CD8-positive, alpha-beta T cell (primary cell): ENCODE measurements at regions of chr7 and their contacts with region 1.

Region 1: GRCh38 chr7:134432296-134433152 is 26.4 kb downstream of the AKR1B1 start:
- DNase-seq: peak; percentile 32 to 89 (median 71)
- ATAC-seq: peak; percentile 88
- H3K4me3 ChIP-seq: peak overlapping the region; percentile 24 to 37
- H3K4me3 Mint-ChIP-seq: peak overlapping the region; percentile 78
- H3K27ac ChIP-seq: peak overlapping the region; percentile 11 to 69
- H3K27ac Mint-ChIP-seq: peak overlapping the region; percentile 77
- H3K4me1 ChIP-seq: peaks cover 4% of the 10 kb centered on the region
- H3K4me1 Mint-ChIP-seq: peaks cover 16% of the 10 kb centered on the region
- H3K27me3 ChIP-seq: no peaks in the 10 kb centered on the region
- H3K27me3 Mint-ChIP-seq: no peaks in the 10 kb centered on the region
- CTCF ChIP-seq: peak; percentile 52

Region 2: GRCh38 chr7:133081599-133082389 is 1350.7 kb before region 1 on chr7 and contains the start of gene CHCHD3:
- CTCF ChIA-PET with region 1: no interaction called
- POLR2A ChIA-PET with region 1: no interaction called
- intact Hi-C with region 1: loop called in 1 of 2 experiments (anchors 5 kb)
- DNase-seq: peak; percentile 88 to 98 (median 96)
- ATAC-seq: peak; percentile 98
- H3K4me3 ChIP-seq: peak within 1 kb of the TSS; percentile 94 to 96
- H3K4me3 Mint-ChIP-seq: peak within 1 kb of the TSS; percentile 92
- H3K27ac ChIP-seq: peak within 1 kb of the TSS; percentile 92 to 94
- H3K27ac Mint-ChIP-seq: peak within 1 kb of the TSS; percentile 96
- H3K4me1 ChIP-seq: peaks cover 16% of the 10 kb centered on the region
- H3K4me1 Mint-ChIP-seq: peaks cover 33% of the 10 kb centered on the region
- H3K27me3 ChIP-seq: no peaks in the 10 kb centered on the region
- H3K27me3 Mint-ChIP-seq: peaks cover 3% of the 10 kb centered on the region
- CTCF ChIP-seq: no peak
- total RNA-seq, gene CHCHD3: 19.0 to 20.4 TPM

Region 3: DNA sequence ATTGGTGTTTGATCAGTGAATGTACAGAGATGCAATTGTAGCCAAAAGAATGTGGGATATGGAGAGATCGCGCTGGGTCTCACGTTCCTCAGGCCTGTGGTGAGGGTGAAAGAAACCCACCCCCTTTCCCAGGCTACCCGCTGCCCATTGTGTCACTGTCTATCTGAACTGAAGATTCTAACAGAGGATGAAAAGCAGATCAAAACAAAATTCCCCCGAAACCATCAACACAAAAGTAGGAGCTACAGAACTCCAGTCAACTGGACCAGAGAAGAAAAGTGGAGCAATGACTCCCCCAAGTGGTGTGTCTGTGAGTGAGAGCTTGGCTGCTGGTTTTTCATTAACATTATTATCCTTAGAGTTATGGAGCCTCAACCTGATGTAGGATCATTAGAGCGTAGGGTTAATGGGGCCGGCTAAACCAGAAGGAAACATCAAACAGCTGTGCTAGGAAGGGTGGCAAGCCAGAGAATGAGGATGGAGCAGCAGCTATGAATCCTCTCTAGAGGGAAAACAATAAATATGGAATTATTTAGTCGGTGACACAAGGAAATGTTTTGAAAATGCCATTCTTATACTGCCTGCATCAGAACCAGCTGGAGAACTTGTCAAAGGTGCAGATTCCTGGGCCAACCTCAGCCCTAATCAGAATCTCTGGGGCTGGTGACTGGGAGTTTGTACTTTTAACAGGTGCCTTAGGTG is 11.9 kb before region 1 on chr7:
- CTCF ChIA-PET with region 1: interaction called, 11 read pairs
- POLR2A ChIA-PET with region 1: no interaction called
- intact Hi-C with region 1: no loop called
- DNase-seq: no peak
- ATAC-seq: no peak
- H3K4me3 ChIP-seq: no peak overlapping the region
- H3K4me3 Mint-ChIP-seq: no peak overlapping the region
- H3K27ac ChIP-seq: no peak overlapping the region
- H3K27ac Mint-ChIP-seq: no peak overlapping the region
- H3K4me1 ChIP-seq: no peaks in the 10 kb centered on the region
- H3K4me1 Mint-ChIP-seq: no peaks in the 10 kb centered on the region
- H3K27me3 ChIP-seq: no peaks in the 10 kb centered on the region
- H3K27me3 Mint-ChIP-seq: peaks cover 5% of the 10 kb centered on the region
- CTCF ChIP-seq: no peak

Region 4: DNA sequence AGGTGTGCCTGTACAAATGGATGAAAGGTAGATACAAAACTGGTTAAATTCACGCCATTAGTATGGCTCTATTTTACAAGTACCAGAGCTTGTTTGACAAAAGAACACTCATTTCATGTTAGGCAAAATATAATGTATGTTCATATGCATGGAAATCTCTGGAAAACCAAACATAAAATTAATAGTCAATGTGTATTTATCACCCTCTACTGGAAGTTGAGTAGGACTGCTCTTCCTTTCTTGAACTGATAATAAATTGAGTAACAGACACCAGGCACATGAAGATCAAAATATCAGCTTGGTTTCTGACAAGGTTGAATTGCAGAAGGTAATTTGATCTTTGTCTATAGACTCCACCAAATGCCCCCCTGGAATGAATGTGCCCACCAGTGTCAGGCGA is 46.2 kb after region 1 on chr7:
- CTCF ChIA-PET with region 1: interaction called, 6 read pairs
- POLR2A ChIA-PET with region 1: interaction called, 3 read pairs
- intact Hi-C with region 1: loop called in 1 of 2 experiments (anchors 1 kb)
- DNase-seq: no peak
- ATAC-seq: no peak
- H3K4me3 ChIP-seq: no peak overlapping the region
- H3K4me3 Mint-ChIP-seq: no peak overlapping the region
- H3K27ac ChIP-seq: no peak overlapping the region
- H3K27ac Mint-ChIP-seq: no peak overlapping the region
- H3K4me1 ChIP-seq: no peaks in the 10 kb centered on the region
- H3K4me1 Mint-ChIP-seq: no peaks in the 10 kb centered on the region
- H3K27me3 ChIP-seq: no peaks in the 10 kb centered on the region
- H3K27me3 Mint-ChIP-seq: peaks cover 5% of the 10 kb centered on the region
- CTCF ChIP-seq: no peak

Region 5: DNA sequence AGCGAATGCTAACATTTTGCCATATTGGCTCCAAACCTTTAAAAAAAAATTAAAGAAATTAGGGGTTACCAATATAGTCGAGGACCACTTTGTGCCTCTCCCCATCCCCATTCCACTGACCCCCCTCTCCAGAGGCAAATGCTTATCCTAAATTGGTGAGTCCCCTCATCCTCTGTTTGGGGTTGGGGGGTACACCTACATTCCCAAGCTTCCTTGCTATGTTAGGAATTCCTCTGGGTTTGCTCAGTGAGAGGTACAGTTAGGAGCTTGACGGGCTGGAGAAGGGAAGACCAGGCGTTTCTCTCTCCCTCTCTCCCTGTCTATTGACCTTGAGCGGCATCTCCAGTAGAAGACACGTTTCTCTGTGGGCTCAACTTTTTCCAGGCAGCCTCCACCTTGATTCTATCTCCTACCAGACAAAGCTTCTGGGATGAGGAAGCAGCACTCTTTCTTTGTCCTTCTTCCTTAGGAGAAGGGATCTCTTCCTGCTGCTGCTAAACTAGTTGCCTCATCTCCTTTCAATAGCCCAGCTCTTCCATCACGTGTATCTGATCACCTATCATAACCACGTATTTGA is 109.8 kb after region 1 on chr7:
- CTCF ChIA-PET with region 1: interaction called, 54 read pairs
- POLR2A ChIA-PET with region 1: interaction called, 3 read pairs
- intact Hi-C with region 1: loop called in 1 of 2 experiments (anchors 1 kb)
- DNase-seq: no peak
- ATAC-seq: no peak
- H3K4me3 ChIP-seq: no peak overlapping the region
- H3K4me3 Mint-ChIP-seq: no peak overlapping the region
- H3K27ac ChIP-seq: no peak overlapping the region
- H3K27ac Mint-ChIP-seq: no peak overlapping the region
- H3K4me1 ChIP-seq: no peaks in the 10 kb centered on the region
- H3K4me1 Mint-ChIP-seq: no peaks in the 10 kb centered on the region
- H3K27me3 ChIP-seq: peaks cover 0 to 4% of the 10 kb centered on the region in 2 experiments
- H3K27me3 Mint-ChIP-seq: peaks cover 21% of the 10 kb centered on the region
- CTCF ChIP-seq: no peak

Region 6: GRCh38 chr7:134750083-134751062 is 317.8 kb after region 1 on chr7:
- CTCF ChIA-PET with region 1: no interaction called
- POLR2A ChIA-PET with region 1: no interaction called
- intact Hi-C with region 1: loop called in 1 of 2 experiments (anchors 10 kb)
- DNase-seq: peak; percentile 24 to 77 (median 68)
- ATAC-seq: peak; percentile 64
- H3K4me3 ChIP-seq: no peak overlapping the region
- H3K4me3 Mint-ChIP-seq: no peak overlapping the region
- H3K27ac ChIP-seq: no peak overlapping the region
- H3K27ac Mint-ChIP-seq: no peak overlapping the region
- H3K4me1 ChIP-seq: no peaks in the 10 kb centered on the region
- H3K4me1 Mint-ChIP-seq: no peaks in the 10 kb centered on the region
- H3K27me3 ChIP-seq: no peaks in the 10 kb centered on the region
- H3K27me3 Mint-ChIP-seq: peaks cover 4% of the 10 kb centered on the region
- CTCF ChIP-seq: peak; percentile 63

Region 7: DNA sequence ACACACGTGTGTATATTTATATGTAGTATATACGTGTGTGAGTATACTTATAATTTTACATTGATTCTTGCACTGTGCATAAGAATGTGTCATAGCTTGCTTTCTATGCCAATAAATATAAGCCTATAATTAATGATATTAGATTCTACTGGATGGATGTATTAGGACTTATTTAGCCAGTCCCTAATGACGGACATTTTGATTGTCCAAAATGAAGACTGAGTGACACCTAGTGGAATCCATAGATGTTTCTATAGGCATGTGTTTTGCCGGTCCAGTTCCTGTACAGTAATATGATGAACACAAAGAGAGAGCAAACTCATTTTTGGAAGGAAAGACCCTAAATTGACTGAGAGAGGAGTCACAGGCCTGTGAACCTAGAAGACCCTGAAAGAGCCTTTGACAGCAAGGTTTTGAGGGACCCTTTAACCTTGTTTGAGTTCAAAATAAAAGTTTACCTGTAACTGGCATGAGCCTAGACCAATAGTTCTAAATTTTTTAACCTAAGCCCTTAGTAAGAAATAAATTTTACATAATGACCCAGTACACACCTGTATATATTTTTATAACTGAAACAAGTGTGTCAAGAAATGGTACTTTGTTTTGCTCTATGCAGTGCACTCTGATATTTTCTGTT is 511.4 kb after region 1 on chr7:
- CTCF ChIA-PET with region 1: no interaction called
- POLR2A ChIA-PET with region 1: no interaction called
- intact Hi-C with region 1: no loop called
- DNase-seq: peak in 1 of 9 experiments; percentile 9
- ATAC-seq: no peak
- H3K4me3 ChIP-seq: no peak overlapping the region
- H3K4me3 Mint-ChIP-seq: no peak overlapping the region
- H3K27ac ChIP-seq: no peak overlapping the region
- H3K27ac Mint-ChIP-seq: no peak overlapping the region
- H3K4me1 ChIP-seq: peaks cover 10% of the 10 kb centered on the region
- H3K4me1 Mint-ChIP-seq: peaks cover 14% of the 10 kb centered on the region
- H3K27me3 ChIP-seq: no peaks in the 10 kb centered on the region
- H3K27me3 Mint-ChIP-seq: peaks cover under 1% of the 10 kb centered on the region
- CTCF ChIP-seq: no peak